Common myeloid progenitor, CD34-positive (primary cell): ENCODE measurements at regions of chr1 and their contacts with region 1.

Region 1: DNA sequence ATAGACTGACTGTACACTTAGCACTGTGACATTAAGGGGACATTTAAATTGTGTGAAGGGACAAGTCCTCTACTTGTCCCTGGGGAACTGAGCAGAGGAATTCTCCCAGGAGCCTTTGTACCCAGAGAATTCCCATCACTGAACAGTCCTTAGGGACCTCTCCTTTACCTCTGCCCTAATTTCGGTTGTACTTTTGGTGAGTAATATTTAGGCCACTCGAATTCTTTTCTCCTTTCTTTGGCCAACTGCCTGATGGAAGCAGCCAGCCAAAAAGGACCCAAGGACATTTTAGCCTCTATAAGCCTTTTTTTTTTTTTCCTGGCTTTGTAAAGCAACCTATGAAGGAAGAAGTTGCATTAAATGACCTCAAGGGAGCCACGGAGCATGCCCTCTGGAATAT is 71.5 kb downstream of the NR5A2 start:
- DNase-seq: no peak
- H3K4me3 ChIP-seq: no peak overlapping the region
- H3K27ac ChIP-seq: no peak overlapping the region
- H3K4me1 ChIP-seq: peaks cover 0 to 7% (median 1%) of the 10 kb centered on the region in 4 experiments
- H3K27me3 ChIP-seq: no peaks in the 10 kb centered on the region

Region 2: DNA sequence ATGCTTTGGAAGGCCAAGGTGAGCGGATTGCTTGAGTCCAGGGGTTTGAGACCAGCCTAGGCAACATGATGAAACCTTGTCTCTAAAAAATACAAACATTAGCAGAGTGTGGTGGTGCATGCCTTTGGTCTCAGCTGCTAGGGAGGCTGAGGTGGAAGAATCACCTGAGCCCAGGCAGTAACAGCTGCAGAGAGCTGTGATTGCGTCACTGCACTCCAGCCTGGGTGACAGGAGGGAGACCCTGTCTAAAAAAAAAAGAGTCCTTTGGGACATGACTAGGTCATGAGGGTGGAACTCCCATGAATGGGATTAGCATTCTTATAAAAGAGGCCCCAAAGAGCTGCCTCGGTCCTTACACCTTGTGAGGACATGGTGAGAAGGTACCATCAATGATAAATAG is 507.6 kb before region 1 on chr1:
- CTCF ChIA-PET with region 1: no interaction called
- POLR2A ChIA-PET with region 1: interaction called, 10 read pairs
- DNase-seq: no peak
- H3K4me3 ChIP-seq: no peak overlapping the region
- H3K27ac ChIP-seq: no peak overlapping the region
- H3K4me1 ChIP-seq: peaks cover 0 to 19% (median 15%) of the 10 kb centered on the region in 4 experiments
- H3K27me3 ChIP-seq: no peaks in the 10 kb centered on the region